ENCODE measurements at regions of chr11 and their contacts with region 1.

Region 1: GRCh38 chr11:57667736-57668435 is at the start of gene ZDHHC5:
- DNase-seq: peak; percentile 100
- H3K4me3 ChIP-seq: peak within 1 kb of the TSS; percentile 74
- H3K4me3 Mint-ChIP-seq: peak within 1 kb of the TSS; percentile 99
- H3K27ac Mint-ChIP-seq: peak within 1 kb of the TSS; percentile 100
- H3K4me1 ChIP-seq: peaks cover 14% of the 10 kb centered on the region; the same call in 1 of the 2 replicates
- H3K4me1 Mint-ChIP-seq: peaks cover 12% of the 10 kb centered on the region
- H3K27me3 ChIP-seq: no peaks in the 10 kb centered on the region
- H3K27me3 Mint-ChIP-seq: no peaks in the 10 kb centered on the region
- CTCF ChIP-seq: peak; percentile 4 to 46
- total RNA-seq, gene ZDHHC5: 66.0 and 72.2 TPM in 2 replicates

Region 2: DNA sequence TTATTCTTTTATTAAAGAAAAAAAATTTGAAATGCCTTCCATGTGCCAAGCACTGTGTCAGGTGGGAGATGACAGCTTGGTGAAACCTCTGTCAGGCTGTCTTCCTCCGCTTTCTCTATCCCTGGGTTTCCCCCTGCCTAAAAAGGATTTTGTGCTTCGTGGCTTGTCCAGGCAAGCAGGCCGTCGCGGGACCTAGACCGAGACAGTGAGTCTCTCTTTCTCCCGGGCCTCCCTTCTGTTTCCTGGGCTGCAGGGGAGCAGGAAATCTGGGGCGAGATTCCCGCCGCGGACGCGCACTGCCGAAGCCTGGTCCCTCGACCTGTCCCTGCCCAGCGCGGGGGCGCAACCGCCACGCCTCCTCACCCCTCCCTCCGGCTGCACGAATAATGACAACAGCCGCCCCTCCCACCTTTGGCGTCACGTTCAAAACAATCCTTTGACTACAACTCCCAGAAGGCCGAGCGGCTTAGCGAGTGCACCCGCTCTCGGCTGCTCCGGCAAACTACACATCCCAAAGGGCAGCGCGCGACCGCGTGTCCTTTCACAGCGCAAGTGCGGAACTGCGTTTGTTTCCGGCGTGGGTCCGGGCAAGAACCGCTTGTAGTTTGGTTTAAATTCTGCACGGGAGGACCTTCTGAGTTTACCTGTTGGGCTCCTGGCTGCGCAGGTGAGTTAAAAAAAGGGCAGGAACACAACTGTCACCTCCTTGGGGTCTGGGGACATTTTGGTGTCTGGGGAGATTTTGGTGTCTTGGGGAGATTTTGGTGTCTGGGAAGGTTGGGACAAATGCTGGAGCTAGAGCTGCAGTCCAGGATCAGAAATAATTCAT is 10.5 kb before region 1 on chr11 and contains the start of gene CLP1:
- CTCF ChIA-PET with region 1: no interaction called
- POLR2A ChIA-PET with region 1: no interaction called
- intact Hi-C with region 1: loop called (anchors 1 kb)
- DNase-seq: peak; percentile 99
- H3K4me3 ChIP-seq: peak within 1 kb of the TSS; percentile 61
- H3K4me3 Mint-ChIP-seq: peak within 1 kb of the TSS; percentile 88
- H3K27ac Mint-ChIP-seq: peak within 1 kb of the TSS; percentile 76
- H3K4me1 ChIP-seq: no peaks in the 10 kb centered on the region
- H3K4me1 Mint-ChIP-seq: peaks cover 8% of the 10 kb centered on the region
- H3K27me3 ChIP-seq: no peaks in the 10 kb centered on the region
- H3K27me3 Mint-ChIP-seq: no peaks in the 10 kb centered on the region
- CTCF ChIP-seq: no peak
- total RNA-seq, gene CLP1: 21.0 and 22.1 TPM in 2 replicates

Region 3: GRCh38 chr11:57680552-57680874 is 12.6 kb after region 1 on chr11:
- CTCF ChIA-PET with region 1: no interaction called
- POLR2A ChIA-PET with region 1: no interaction called
- intact Hi-C with region 1: loop called (anchors 2 kb)
- DNase-seq: no peak
- H3K4me3 ChIP-seq: no peak overlapping the region
- H3K4me3 Mint-ChIP-seq: no peak overlapping the region
- H3K27ac Mint-ChIP-seq: no peak overlapping the region
- H3K4me1 ChIP-seq: peaks cover 6% of the 10 kb centered on the region; the same call in 1 of the 2 replicates
- H3K4me1 Mint-ChIP-seq: no peaks in the 10 kb centered on the region
- H3K27me3 ChIP-seq: no peaks in the 10 kb centered on the region
- H3K27me3 Mint-ChIP-seq: no peaks in the 10 kb centered on the region
- CTCF ChIP-seq: no peak

Region 4: DNA sequence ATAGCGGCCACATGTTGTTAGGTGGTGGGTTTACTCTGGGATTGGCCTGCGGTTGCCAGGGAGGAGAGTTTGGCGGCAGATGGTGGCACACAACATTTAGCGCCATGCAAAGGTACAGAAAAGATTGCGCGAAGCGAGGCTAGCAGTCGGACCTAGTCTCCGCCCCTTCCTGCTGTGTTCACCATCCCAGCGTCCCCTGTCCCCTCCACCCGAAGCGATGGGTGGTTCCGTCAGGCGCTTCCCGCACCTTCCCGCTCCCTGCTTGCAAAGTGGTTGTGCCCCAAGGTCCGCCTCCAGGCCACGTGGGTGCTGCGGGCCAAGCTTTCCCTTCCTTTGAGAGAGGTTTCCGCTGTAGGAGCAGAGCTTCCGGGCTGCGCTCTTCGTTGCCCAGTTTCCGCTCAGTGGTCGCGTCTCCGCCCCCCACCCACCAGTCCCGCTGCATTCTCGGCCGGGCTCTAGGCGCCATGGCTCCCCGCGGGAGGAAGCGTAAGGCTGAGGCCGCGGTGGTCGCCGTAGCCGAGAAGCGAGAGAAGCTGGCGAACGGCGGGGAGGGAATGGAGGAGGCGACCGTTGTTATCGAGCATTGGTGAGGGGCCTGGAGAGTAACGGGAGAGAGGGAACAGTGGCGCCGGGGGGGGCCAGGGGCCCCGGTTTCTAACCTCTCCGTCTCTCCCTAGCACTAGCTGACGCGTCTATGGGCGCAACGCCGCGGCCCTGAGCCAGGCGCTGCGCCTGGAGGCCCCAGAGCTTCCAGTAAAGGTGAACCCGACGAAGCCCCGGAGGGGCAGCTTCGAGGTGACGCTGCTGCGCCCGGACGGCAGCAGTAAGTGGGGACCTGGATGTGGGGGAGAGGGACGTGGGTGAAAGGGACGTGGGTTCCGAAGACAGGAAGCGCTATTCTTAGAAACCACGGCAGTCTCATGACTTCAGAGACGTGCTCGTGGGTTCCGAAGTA is 73.5 kb after region 1 on chr11 and contains the start of gene SELENOH:
- CTCF ChIA-PET with region 1: interaction called, 6 read pairs
- POLR2A ChIA-PET with region 1: no interaction called
- intact Hi-C with region 1: loop called (anchors 1 kb)
- DNase-seq: peak; percentile 98 to 99
- H3K4me3 ChIP-seq: peak within 1 kb of the TSS; percentile 83
- H3K4me3 Mint-ChIP-seq: peak within 1 kb of the TSS; percentile 94
- H3K27ac Mint-ChIP-seq: peak within 1 kb of the TSS; percentile 98
- H3K4me1 ChIP-seq: peaks cover 5% of the 10 kb centered on the region
- H3K4me1 Mint-ChIP-seq: peaks cover 1% of the 10 kb centered on the region
- H3K27me3 ChIP-seq: no peaks in the 10 kb centered on the region
- H3K27me3 Mint-ChIP-seq: no peaks in the 10 kb centered on the region
- CTCF ChIP-seq: no peak
- total RNA-seq, gene SELENOH: 174 and 175 TPM in 2 replicates